ENCODE measurements at regions of chr15 and their contacts with region 1.

Region 1: DNA sequence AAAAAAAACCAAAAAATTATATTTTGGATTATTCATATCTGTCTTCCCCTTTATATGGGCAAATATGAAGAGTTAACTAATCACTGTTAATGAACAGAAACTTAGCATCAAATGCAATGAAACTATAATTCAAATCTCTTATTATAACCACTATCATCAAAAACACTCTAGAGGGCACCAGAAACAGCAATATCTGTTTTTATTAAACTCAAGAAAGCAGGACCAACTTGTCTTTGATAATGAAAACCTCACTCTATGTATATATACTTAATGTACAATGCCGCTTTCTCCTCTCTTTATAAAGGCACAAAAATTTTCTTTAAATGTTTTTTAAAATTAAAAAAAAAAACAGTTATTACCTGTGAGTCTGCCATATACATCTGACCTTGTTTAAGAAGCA is 92.7 kb downstream of the UACA start:
- DNase-seq: no peak
- H3K4me3 ChIP-seq: peak overlapping the region in 1 of 3 donors; percentile 17
- H3K27ac ChIP-seq: no peak overlapping the region
- H3K4me1 ChIP-seq: peaks cover 0 to 4% (median 0%) of the 10 kb centered on the region in 3 donors
- H3K27me3 ChIP-seq: no peaks in the 10 kb centered on the region
- CTCF ChIP-seq: no peak

Region 2: GRCh38 chr15:70815644-70816043 is 145.0 kb after region 1 on chr15:
- intact Hi-C with region 1: loop called (anchors 10 kb)
- DNase-seq: no peak
- H3K4me3 ChIP-seq: no peak overlapping the region
- H3K27ac ChIP-seq: no peak overlapping the region
- H3K4me1 ChIP-seq: no peaks in the 10 kb centered on the region
- H3K27me3 ChIP-seq: no peaks in the 10 kb centered on the region
- CTCF ChIP-seq: no peak